GM12878 (cell line): ENCODE measurements at regions of chr1 and their contacts with region 1.

Region 1: DNA sequence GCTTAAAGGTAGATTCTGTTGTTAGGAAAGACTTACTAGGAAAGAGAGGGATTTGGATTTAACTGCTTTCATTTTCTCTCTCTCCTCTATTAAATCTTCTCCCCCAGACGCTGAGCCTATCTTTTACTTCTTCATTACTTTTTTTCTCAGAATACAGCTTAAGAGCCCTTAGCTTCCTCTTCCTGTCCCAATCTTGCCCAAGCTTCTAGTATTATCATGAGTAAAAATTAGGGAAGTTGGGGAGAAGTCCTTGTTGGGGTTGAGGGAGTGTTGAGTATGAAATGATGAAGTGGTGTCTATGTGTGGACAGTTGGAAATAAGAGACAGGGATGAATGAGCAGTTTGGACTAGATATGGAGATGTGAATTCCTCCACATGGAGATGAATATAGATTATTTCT is 35.0 kb downstream of the ACP6 start:
- DNase-seq: no peak
- ATAC-seq: no peak
- H3K4me3 ChIP-seq: no peak overlapping the region
- H3K27ac ChIP-seq: no peak overlapping the region
- H3K4me1 ChIP-seq: no peaks in the 10 kb centered on the region
- H3K27me3 ChIP-seq: no peaks in the 10 kb centered on the region
- CTCF ChIP-seq: no peak
- EP300 ChIP-seq: no peak
- POLR2A ChIP-seq: no peak
- RAD21 ChIP-seq: no peak

Region 2: DNA sequence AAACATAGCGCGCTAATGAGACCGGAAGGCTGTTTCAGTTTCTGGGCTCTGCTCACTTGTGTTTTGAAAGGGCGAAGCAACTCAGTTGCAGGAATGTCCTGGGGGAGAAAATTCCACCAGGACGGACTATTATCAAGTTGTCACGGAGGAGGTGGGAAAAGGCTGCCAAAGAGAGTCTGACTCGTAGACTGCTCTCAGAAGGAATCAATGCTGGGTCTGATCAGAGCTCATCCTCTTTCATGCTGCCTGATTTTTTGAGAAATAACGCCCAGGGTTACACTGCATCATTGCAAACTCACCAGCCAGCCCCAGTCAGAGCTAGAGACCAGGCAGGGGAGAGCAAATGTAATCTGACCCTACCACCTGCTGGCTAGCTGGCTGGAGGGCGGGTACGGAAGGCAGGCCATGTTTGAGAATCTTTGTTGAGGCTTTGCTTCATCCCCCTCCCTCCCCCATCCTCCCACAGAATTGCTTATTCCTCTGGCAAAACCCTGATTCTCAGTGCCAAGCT is 130.5 kb before region 1 on chr1:
- CTCF ChIA-PET with region 1: no interaction called
- POLR2A ChIA-PET with region 1: no interaction called
- RAD21 ChIA-PET with region 1: no interaction called
- SMC1A ChIA-PET with region 1: no interaction called
- in situ Hi-C with region 1: loop called (anchors 5 kb)
- intact Hi-C with region 1: no loop called
- DNase-seq: no peak
- ATAC-seq: no peak
- H3K4me3 ChIP-seq: no peak overlapping the region
- H3K27ac ChIP-seq: no peak overlapping the region
- H3K4me1 ChIP-seq: no peaks in the 10 kb centered on the region
- H3K27me3 ChIP-seq: no peaks in the 10 kb centered on the region; a peak in 2 of 4 replicates
- CTCF ChIP-seq: no peak
- EP300 ChIP-seq: no peak
- POLR2A ChIP-seq: no peak
- RAD21 ChIP-seq: no peak

Region 3: GRCh38 chr1:147618077-147618569 is 17.2 kb before region 1 on chr1:
- CTCF ChIA-PET with region 1: no interaction called
- POLR2A ChIA-PET with region 1: no interaction called
- RAD21 ChIA-PET with region 1: no interaction called
- SMC1A ChIA-PET with region 1: no interaction called
- in situ Hi-C with region 1: no loop called
- intact Hi-C with region 1: no loop called
- DNase-seq: no peak
- ATAC-seq: no peak
- H3K4me3 ChIP-seq: no peak overlapping the region
- H3K27ac ChIP-seq: no peak overlapping the region
- H3K4me1 ChIP-seq: no peaks in the 10 kb centered on the region
- H3K27me3 ChIP-seq: no peaks in the 10 kb centered on the region
- CTCF ChIP-seq: no peak
- EP300 ChIP-seq: no peak
- POLR2A ChIP-seq: no peak
- RAD21 ChIP-seq: no peak

Region 4: GRCh38 chr1:147676290-147677053 is 41.1 kb after region 1 on chr1:
- CTCF ChIA-PET with region 1: no interaction called
- POLR2A ChIA-PET with region 1: no interaction called
- RAD21 ChIA-PET with region 1: no interaction called
- SMC1A ChIA-PET with region 1: no interaction called
- in situ Hi-C with region 1: no loop called
- intact Hi-C with region 1: no loop called
- DNase-seq: no peak
- ATAC-seq: no peak
- H3K4me3 ChIP-seq: no peak overlapping the region
- H3K27ac ChIP-seq: no peak overlapping the region
- H3K4me1 ChIP-seq: no peaks in the 10 kb centered on the region
- H3K27me3 ChIP-seq: no peaks in the 10 kb centered on the region
- CTCF ChIP-seq: no peak
- EP300 ChIP-seq: no peak
- POLR2A ChIP-seq: no peak
- RAD21 ChIP-seq: no peak